Activated B cell treated with CpG ODN at 0.5 μM for 24 hours (primary cell): ENCODE measurements at regions of chr6 and their contacts with region 1.

Region 1: GRCh38 chr6:42819803-42820511 is 38.1 kb downstream of the BICRAL start:
- DNase-seq: no peak
- ATAC-seq: peak; percentile 34
- H3K4me3 Mint-ChIP-seq: no peak overlapping the region
- H3K27ac Mint-ChIP-seq: peak overlapping the region; percentile 63
- H3K4me1 Mint-ChIP-seq: peaks cover 29% of the 10 kb centered on the region
- H3K27me3 Mint-ChIP-seq: no peaks in the 10 kb centered on the region
- CTCF ChIP-seq: no peak

Region 2: GRCh38 chr6:42735976-42736375 is 84.0 kb before region 1 on chr6:
- CTCF ChIA-PET with region 1: no interaction called
- POLR2A ChIA-PET with region 1: interaction called, 10 read pairs
- intact Hi-C with region 1: no loop called
- DNase-seq: no peak
- ATAC-seq: no peak
- H3K4me3 Mint-ChIP-seq: no peak overlapping the region
- H3K27ac Mint-ChIP-seq: no peak overlapping the region
- H3K4me1 Mint-ChIP-seq: peaks cover 3% of the 10 kb centered on the region
- H3K27me3 Mint-ChIP-seq: peaks cover 4% of the 10 kb centered on the region
- CTCF ChIP-seq: no peak

Region 3: GRCh38 chr6:42796171-42796570 is 23.8 kb before region 1 on chr6:
- CTCF ChIA-PET with region 1: no interaction called
- POLR2A ChIA-PET with region 1: no interaction called
- intact Hi-C with region 1: no loop called
- DNase-seq: no peak
- ATAC-seq: no peak
- H3K4me3 Mint-ChIP-seq: no peak overlapping the region
- H3K27ac Mint-ChIP-seq: no peak overlapping the region
- H3K4me1 Mint-ChIP-seq: peaks cover 16% of the 10 kb centered on the region
- H3K27me3 Mint-ChIP-seq: no peaks in the 10 kb centered on the region
- CTCF ChIP-seq: no peak